Endothelial cell of umbilical vein (primary cell): ENCODE measurements at regions of chr12 and their contacts with region 1.

Region 1: GRCh38 chr12:4107436-4107878 is 166.1 kb upstream of the CCND2 start:
- DNase-seq: peak; percentile 50
- H3K4me3 ChIP-seq: no peak overlapping the region
- H3K27ac ChIP-seq: no peak overlapping the region
- H3K4me1 ChIP-seq: no peaks in the 10 kb centered on the region
- H3K27me3 ChIP-seq: peaks cover 0 to 5% of the 10 kb centered on the region in 2 experiments
- CTCF ChIP-seq: peak; percentile 63 to 64
- POLR2A ChIP-seq: no peak

Region 2: GRCh38 chr12:3964439-3964838 is 143.0 kb before region 1 on chr12:
- CTCF ChIA-PET with region 1: no interaction called
- POLR2A ChIA-PET with region 1: no interaction called
- dilution Hi-C with region 1: no loop called
- intact Hi-C with region 1: no loop called
- DNase-seq: no peak
- H3K4me3 ChIP-seq: no peak overlapping the region
- H3K27ac ChIP-seq: no peak overlapping the region
- H3K4me1 ChIP-seq: no peaks in the 10 kb centered on the region
- H3K27me3 ChIP-seq: no peaks in the 10 kb centered on the region
- CTCF ChIP-seq: no peak
- POLR2A ChIP-seq: no peak

Region 3: DNA sequence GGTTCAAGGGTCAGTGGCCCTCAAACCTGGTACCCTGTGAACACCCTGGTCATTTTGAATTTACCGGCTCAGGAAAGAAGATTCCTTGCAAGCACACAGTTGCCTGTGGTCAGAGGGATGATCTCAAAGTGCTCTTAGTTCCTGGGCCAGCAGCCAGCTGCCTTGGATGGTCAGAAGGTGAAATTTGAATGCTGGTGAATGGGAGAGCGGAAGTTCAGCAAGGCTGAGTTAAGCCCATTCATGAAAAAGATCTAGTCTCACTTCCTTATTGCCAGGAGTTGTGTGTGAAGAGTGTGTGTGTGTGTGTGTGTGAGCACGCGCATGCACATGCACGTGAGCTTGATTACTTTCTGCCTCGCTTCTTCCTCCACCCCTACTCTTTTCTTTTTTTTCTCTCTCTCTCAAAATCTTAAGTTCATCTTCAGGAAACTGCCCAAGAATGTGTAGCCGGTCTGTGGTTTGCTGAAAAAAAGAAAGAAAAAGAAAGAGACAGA is 10.6 kb after region 1 on chr12:
- CTCF ChIA-PET with region 1: interaction called, 13 read pairs
- POLR2A ChIA-PET with region 1: no interaction called
- dilution Hi-C with region 1: no loop called
- intact Hi-C with region 1: no loop called
- DNase-seq: no peak
- H3K4me3 ChIP-seq: no peak overlapping the region
- H3K27ac ChIP-seq: no peak overlapping the region
- H3K4me1 ChIP-seq: no peaks in the 10 kb centered on the region
- H3K27me3 ChIP-seq: no peaks in the 10 kb centered on the region
- CTCF ChIP-seq: no peak
- POLR2A ChIP-seq: no peak

Region 4: GRCh38 chr12:4246116-4246515 is 138.7 kb after region 1 on chr12:
- CTCF ChIA-PET with region 1: no interaction called
- POLR2A ChIA-PET with region 1: no interaction called
- dilution Hi-C with region 1: no loop called
- intact Hi-C with region 1: no loop called
- DNase-seq: no peak
- H3K4me3 ChIP-seq: no peak overlapping the region
- H3K27ac ChIP-seq: no peak overlapping the region
- H3K4me1 ChIP-seq: no peaks in the 10 kb centered on the region
- H3K27me3 ChIP-seq: no peaks in the 10 kb centered on the region
- CTCF ChIP-seq: no peak
- POLR2A ChIP-seq: no peak